Psoas muscle (tissue), 8 donors: ENCODE measurements at regions of chr12 and their contacts with region 1.

Region 1: DNA sequence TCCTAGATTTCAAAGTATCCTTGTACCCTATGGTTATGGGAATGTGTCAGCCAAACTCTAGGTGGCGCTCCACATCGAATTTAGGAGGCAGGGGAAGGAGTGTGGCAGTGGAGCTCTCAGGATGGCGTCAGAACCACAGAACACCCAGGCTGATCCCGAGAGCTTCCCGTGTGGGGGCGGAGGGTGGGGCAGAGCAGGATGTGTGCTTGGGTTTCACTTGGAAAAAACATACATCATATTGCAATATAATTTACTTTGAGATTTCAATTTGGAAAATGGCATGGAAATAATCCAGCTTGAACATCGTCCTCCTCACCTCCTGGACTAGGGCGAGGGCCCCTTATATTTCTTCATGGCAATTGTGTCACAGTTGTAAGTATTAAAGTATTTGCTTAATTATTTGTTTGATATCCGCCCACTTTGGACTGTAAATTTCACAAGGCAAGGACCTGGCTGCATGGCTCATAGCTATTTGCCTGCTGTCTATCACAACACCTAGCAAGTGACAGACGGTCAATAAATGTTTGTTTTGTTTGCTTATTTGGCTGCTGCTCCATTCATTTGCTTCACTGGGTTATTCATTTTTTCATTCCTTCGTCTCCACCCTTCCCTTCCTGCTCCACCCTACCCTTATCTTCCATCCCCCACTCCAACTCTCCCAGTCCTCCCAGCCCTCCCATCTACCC is 221.5 kb upstream of the HMGA2 start:
- DNase-seq: peak; percentile 70 to 79
- ATAC-seq: peak; percentile 70 to 95 (median 91)
- H3K4me3 ChIP-seq: peak overlapping the region; percentile 33
- H3K27ac ChIP-seq: no peak overlapping the region
- H3K4me1 ChIP-seq: peaks cover 5% of the 10 kb centered on the region
- H3K27me3 ChIP-seq: peaks cover 0 to 17% (median 5%) of the 10 kb centered on the region in 3 donors
- CTCF ChIP-seq: peak; percentile 62

Region 2: DNA sequence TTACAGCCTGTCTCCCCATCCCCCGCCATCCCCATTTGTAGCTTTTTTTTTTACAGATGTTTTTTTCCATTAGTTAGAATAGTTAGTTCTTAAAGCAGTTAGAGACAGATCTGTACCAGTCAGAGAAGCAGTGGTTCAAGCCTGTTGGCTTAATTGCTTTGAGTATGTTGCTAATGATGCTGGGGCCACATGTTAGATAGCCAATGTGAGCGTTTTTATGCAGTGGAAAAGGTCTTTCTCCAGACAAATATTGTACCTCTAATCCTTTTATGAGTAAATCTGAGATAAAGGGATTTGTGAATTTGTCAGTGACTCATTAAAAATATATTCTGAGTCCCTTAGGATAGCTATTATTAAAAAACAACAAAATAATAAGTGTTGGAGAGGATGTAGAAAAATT is 170.1 kb before region 1 on chr12:
- intact Hi-C with region 1: no loop called
- DNase-seq: no peak
- ATAC-seq: no peak
- H3K4me3 ChIP-seq: no peak overlapping the region
- H3K27ac ChIP-seq: no peak overlapping the region
- H3K4me1 ChIP-seq: peaks cover 10% of the 10 kb centered on the region
- H3K27me3 ChIP-seq: no peaks in the 10 kb centered on the region
- CTCF ChIP-seq: no peak

Region 3: DNA sequence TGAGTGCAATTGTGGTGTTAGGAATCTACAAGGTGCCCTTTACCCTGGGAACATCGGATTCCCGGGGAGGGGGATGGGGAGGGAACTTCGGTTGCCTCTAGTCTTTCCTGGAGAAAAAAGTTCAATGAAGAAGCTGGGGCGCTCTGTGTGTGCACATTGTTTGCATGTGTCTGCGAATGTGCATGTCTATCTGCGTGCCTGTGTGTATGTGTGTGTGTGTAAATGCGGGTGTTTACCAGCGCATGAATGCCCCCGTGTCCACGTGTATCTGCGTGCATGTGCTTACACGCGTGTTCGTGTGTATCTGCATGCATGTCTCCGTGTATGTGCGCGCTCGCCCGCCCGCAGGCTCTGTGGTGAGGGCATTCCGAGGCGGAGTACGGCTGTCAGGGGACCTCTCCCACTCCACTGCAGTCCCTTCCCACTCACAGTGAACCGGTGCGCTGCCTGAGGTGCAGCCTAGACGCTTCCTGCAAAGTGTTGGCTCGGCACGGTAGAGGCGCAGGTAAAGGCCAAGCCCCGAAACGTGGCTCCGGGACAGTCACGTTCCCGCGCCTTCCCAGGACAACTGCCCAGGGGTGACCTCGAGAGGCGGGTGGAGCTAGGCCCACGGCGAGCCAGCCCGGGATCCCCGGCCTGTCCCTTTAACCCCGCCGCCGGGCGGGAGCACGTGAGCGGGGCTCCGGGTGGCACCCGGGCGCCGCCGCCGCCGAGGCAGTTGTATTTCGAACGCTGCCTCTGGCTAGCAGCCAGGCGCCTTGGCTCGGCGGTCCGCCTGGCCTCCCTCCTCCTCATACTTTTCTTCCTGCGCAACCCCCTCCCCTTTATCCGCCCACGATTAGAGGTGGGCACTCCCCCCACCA is 221.0 kb after region 1 on chr12:
- intact Hi-C with region 1: loop called in 1 of 2 experiments (anchors 10 kb)
- DNase-seq: peak in 1 of 2 donors; percentile 25
- ATAC-seq: peak in 3 of 4 donors; percentile 39 to 71 (median 63)
- H3K4me3 ChIP-seq: peak overlapping the region; percentile 67
- H3K27ac ChIP-seq: no peak overlapping the region
- H3K4me1 ChIP-seq: peaks cover 21% of the 10 kb centered on the region
- H3K27me3 ChIP-seq: peaks cover 0 to 93% (median 37%) of the 10 kb centered on the region in 3 donors
- CTCF ChIP-seq: no peak

Region 4: DNA sequence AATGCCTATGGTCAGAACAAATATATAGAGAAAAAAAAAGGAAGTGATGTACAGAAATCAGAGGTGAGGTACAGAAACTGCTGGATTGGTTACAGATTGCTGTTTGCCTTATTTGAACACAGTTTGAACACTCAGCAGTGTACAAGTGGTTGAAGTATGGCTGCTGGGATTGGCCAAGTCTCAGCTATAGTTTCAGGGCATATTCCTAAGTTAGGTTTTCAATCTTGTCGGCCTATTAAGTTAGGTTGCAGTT is 381.4 kb after region 1 on chr12:
- intact Hi-C with region 1: loop called in 1 of 2 experiments (anchors 5 kb)
- DNase-seq: no peak
- ATAC-seq: no peak
- H3K4me3 ChIP-seq: no peak overlapping the region
- H3K27ac ChIP-seq: no peak overlapping the region
- H3K4me1 ChIP-seq: no peaks in the 10 kb centered on the region
- H3K27me3 ChIP-seq: no peaks in the 10 kb centered on the region
- CTCF ChIP-seq: no peak

Region 5: GRCh38 chr12:66087365-66087943 is 484.7 kb after region 1 on chr12:
- intact Hi-C with region 1: loop called (anchors 2 to 5 kb)
- DNase-seq: peak; percentile 39 to 56
- ATAC-seq: peak; percentile 59 to 81 (median 76)
- H3K4me3 ChIP-seq: no peak overlapping the region
- H3K27ac ChIP-seq: no peak overlapping the region
- H3K4me1 ChIP-seq: no peaks in the 10 kb centered on the region
- H3K27me3 ChIP-seq: no peaks in the 10 kb centered on the region
- CTCF ChIP-seq: peak; percentile 77